ENCODE measurements at regions of chr3 and their contacts with region 1.

Region 1: GRCh38 chr3:44761424-44762169 is at the starts of genes KIAA1143 and KIF15:
- DNase-seq: peak; percentile 91 to 98 (median 94)
- ATAC-seq: peak; percentile 96 to 99
- H3K4me3 Mint-ChIP-seq: peak within 1 kb of the TSS; percentile 87 to 96 (median 90)
- H3K27ac Mint-ChIP-seq: peak within 1 kb of the TSS; percentile 83 to 96 (median 90)
- H3K4me1 Mint-ChIP-seq: peaks cover 16 to 37% (median 35%) of the 10 kb centered on the region in 4 donors
- H3K27me3 Mint-ChIP-seq: peaks cover 0 to 16% (median 0%) of the 10 kb centered on the region in 5 donors
- polyA plus RNA-seq, gene KIAA1143: 24.1 to 34.9 (median 30.6) TPM
- polyA plus RNA-seq, gene KIF15: 0.08 TPM in 1 of 3 donors, not detected in the others

Region 2: DNA sequence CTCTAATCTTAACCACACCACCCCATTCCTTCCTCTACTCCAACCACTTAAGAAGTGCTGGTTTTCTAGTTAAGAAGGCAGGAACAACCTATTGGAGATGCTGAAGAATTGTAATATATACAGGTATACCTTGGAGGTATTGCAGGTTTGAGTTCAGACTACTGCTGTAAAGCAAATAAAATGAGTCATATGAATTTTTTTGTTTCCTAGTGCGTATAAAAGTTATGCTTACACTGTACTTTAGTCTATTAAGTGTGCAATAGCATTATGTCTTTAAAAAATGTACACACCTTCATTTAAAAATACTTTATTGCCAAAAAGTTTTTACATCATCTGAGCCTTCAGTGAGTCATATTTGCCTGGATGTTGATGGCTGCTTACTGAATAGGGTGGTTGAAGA is 497.5 kb before region 1 on chr3:
- POLR2A ChIA-PET with region 1: no interaction called
- DNase-seq: no peak
- ATAC-seq: no peak
- H3K4me3 Mint-ChIP-seq: no peak overlapping the region
- H3K27ac Mint-ChIP-seq: no peak overlapping the region
- H3K4me1 Mint-ChIP-seq: peaks cover 0 to 4% (median 0%) of the 10 kb centered on the region in 4 donors
- H3K27me3 Mint-ChIP-seq: peaks cover 0 to 7% (median 5%) of the 10 kb centered on the region in 5 donors

Region 3: DNA sequence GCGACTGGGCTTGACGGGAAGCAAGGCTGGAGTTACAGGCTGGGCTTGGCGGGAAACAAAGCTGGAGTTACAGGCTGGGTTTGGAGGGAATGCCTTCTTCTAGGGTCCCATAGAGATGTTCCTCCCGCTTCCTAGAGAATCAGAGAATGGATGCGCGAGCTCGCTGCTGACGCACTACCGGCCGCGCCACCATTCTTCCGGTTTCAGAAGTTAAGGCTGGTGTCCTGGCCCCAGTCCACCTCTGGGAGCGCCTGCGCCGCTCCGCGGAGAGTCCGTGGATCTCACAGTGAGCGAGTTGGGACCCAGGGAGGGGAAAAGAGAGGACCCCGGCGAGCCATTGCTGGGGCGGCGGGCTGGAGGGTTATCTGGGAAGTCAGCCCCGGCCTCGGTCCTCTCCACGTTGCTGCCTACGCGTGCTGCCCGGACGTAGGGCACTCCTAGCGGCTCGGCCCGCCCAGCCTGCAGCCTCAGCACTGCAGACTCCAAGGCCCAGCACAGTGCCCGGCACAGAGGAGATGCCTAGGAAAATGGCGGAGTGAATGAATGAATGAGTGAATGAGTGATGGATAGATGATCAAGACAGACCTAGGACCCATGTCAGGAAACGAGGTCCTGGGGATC is 49.0 kb before region 1 on chr3 and contains the start of gene ZNF502:
- POLR2A ChIA-PET with region 1: interaction called, 14 read pairs
- DNase-seq: peak; percentile 31 to 73 (median 53)
- ATAC-seq: peak; percentile 93
- H3K4me3 Mint-ChIP-seq: peak within 1 kb of the TSS; percentile 87 to 98 (median 91)
- H3K27ac Mint-ChIP-seq: peak within 1 kb of the TSS; percentile 64 to 96 (median 79)
- H3K4me1 Mint-ChIP-seq: peaks cover 6 to 22% (median 14%) of the 10 kb centered on the region in 4 donors
- H3K27me3 Mint-ChIP-seq: peaks cover 11 to 30% (median 16%) of the 10 kb centered on the region in 5 donors
- polyA plus RNA-seq, gene ZNF502: 2.3 to 3.4 (median 2.4) TPM

Region 4: DNA sequence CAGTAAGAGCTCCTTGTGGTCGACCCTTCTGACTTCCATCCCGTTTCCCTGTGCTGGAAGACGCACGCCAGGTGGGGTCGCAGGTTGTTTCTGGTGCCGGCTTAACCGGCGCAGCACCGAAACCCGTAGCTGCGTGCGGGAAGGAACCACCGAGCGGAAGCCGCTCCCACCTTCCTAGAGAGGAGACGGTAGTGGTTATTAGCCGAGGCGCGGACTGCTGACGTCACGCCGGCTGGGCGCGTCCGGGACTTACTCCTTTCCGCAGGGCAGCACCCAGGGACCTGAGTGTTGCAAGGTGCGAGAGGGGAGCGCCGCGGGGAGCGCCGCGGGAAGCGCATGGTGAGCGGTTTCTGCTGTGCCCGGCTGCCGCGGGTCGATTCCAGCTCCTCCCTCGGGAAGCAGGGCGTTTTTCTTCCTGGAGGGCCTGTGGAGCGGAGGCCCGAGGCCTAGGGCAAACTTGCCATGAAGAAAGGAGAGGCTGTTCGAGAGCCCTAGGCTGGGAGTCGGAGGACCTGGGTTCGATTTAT is 32.1 kb before region 1 on chr3 and contains the start of gene ZNF501:
- POLR2A ChIA-PET with region 1: interaction called, 27 read pairs
- DNase-seq: peak; percentile 56 to 89 (median 77)
- ATAC-seq: peak; percentile 96
- H3K4me3 Mint-ChIP-seq: peak within 1 kb of the TSS; percentile 85 to 98 (median 93)
- H3K27ac Mint-ChIP-seq: peak within 1 kb of the TSS; percentile 57 to 95 (median 86)
- H3K4me1 Mint-ChIP-seq: peaks cover 9 to 23% (median 15%) of the 10 kb centered on the region in 4 donors
- H3K27me3 Mint-ChIP-seq: no peaks in the 10 kb centered on the region
- polyA plus RNA-seq, gene ZNF501: 1.6 to 2.3 (median 2.2) TPM

Region 5: DNA sequence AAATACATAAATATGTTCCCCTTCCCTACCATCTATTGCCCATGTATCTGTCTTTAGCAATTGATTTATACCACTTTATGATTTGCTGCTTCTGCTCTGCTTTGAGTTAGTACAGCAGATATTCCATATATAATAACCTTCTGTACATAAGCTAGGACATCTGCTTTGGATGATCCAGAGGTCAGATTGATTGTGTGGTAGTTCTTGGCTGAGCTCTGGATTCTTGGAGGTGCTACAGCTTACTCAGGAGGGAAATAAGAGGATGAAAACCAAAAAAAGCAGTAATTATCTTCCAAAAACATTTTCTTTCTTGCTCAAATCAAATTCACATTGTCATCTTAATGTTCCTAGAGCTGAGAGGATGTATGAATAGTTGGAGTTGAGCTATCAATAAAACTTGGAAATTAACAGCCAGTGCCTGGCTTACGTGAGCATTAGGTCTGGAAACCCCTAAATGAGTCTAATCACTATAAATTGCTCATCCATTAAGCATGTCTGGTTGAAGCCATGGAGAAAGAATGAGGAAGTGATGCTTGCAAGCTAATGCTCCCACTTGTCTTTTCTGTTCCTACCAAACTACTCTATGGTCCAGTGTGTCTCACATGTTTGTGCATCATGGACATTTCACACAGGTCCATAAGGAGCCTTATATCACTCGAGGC is 63.8 kb after region 1 on chr3:
- POLR2A ChIA-PET with region 1: no interaction called
- DNase-seq: no peak
- ATAC-seq: no peak
- H3K4me3 Mint-ChIP-seq: no peak overlapping the region
- H3K27ac Mint-ChIP-seq: no peak overlapping the region
- H3K4me1 Mint-ChIP-seq: no peaks in the 10 kb centered on the region
- H3K27me3 Mint-ChIP-seq: no peaks in the 10 kb centered on the region